ENCODE measurements at regions of chr20 and their contacts with region 1.

Region 1: DNA sequence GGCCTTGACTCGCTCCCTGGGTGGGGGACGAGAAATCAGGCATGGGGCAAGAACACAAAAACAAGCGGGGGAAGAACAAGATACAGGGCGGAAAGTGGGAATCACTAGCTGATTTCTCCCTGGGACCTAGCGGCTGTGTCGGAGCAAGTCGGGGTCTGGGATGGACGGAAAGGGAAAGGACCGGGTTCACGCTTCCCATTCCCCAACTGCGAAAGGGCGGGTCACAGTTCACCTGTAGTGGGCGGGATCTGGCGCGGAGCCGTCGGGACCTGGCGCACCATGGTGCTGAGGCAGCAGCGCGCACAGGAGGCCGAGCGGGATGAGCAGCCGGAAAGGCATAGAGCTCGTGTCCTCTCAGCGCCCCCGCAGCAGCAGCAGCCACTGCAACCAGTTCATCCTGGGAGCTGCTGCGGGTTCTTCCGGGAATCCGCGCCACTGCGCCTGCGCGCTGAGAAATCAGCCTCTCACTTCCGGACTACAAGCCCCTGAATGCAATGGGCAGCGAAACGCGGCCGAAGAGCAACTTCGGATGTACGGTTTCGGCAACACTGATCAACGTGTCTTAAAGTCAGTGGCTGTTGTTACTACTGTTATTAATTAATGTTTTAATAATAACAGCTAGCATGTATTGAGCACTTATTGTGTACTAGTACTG is at the start of gene EDEM2:
- DNase-seq: peak; percentile 93
- H3K4me3 ChIP-seq: peak within 1 kb of the TSS; percentile 98
- H3K27ac ChIP-seq: peak within 1 kb of the TSS; percentile 68
- H3K27me3 ChIP-seq: no peaks in the 10 kb centered on the region
- CTCF ChIP-seq: no peak
- polyA plus RNA-seq, gene EDEM2: 28.3 and 30.3 TPM in 2 replicates

Region 2: DNA sequence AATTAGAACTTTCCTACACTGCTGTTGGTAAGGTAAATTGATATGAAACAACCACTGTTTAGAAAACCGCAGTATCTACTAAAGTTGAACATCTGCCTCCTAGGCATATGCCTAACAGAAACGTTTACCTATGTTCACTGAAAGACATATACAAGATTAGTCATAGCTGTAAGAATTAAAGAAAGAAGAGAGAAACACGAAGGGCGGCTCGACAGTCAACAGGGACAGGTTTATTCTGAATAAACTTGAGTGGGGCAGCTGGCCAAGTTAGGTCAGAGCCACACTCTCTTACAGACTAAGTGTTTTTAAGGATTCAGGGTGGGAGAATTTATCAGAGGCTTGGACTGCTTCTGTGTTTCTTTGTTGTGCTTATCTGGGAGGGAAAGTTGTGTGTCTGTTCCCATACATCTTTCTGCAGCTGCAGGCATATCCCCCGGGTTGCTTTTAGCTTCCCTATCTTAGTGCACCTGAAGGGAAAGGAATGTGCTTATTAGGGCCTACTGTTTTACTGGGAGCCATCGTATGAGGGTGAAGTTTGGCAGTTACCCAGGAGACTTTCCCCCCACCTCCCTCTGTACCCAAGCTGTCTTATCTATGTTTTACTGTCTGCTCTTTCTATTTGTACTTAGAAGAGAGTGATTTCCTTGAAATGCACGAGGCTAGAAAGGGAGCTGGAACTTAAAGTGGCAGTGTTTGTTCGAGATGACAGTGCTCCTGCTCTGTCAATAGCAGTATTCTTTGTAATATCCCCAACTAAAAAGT is 45.2 kb after region 1 on chr20:
- CTCF ChIA-PET with region 1: interaction called, 14 read pairs
- POLR2A ChIA-PET with region 1: interaction called, 4 read pairs
- DNase-seq: no peak
- H3K4me3 ChIP-seq: no peak overlapping the region
- H3K27ac ChIP-seq: no peak overlapping the region
- H3K27me3 ChIP-seq: no peaks in the 10 kb centered on the region
- CTCF ChIP-seq: no peak

Region 3: GRCh38 chr20:35207950-35208611 is 61.0 kb after region 1 on chr20:
- CTCF ChIA-PET with region 1: interaction called, 95 read pairs
- POLR2A ChIA-PET with region 1: no interaction called
- DNase-seq: peak; percentile 61
- H3K4me3 ChIP-seq: peak overlapping the region; percentile 17; the same call in 1 of the 2 replicates
- H3K27ac ChIP-seq: peak overlapping the region; percentile 47
- H3K27me3 ChIP-seq: no peaks in the 10 kb centered on the region
- CTCF ChIP-seq: peak; percentile 84

Region 4: GRCh38 chr20:35269055-35269781 is 122.2 kb after region 1 on chr20:
- CTCF ChIA-PET with region 1: interaction called, 33 read pairs
- POLR2A ChIA-PET with region 1: interaction called, 4 read pairs
- DNase-seq: no peak
- H3K4me3 ChIP-seq: no peak overlapping the region
- H3K27ac ChIP-seq: no peak overlapping the region
- H3K27me3 ChIP-seq: no peaks in the 10 kb centered on the region
- CTCF ChIP-seq: peak; percentile 84

Region 5: GRCh38 chr20:35368666-35369423 is 221.8 kb after region 1 on chr20:
- CTCF ChIA-PET with region 1: no interaction called
- POLR2A ChIA-PET with region 1: no interaction called
- DNase-seq: no peak
- H3K4me3 ChIP-seq: no peak overlapping the region
- H3K27ac ChIP-seq: no peak overlapping the region
- H3K27me3 ChIP-seq: no peaks in the 10 kb centered on the region
- CTCF ChIP-seq: no peak

Region 6: GRCh38 chr20:35437491-35437998 is 290.5 kb after region 1 on chr20:
- CTCF ChIA-PET with region 1: interaction called, 26 read pairs
- POLR2A ChIA-PET with region 1: interaction called, 6 read pairs
- DNase-seq: no peak
- H3K4me3 ChIP-seq: peak overlapping the region; percentile 71
- H3K27ac ChIP-seq: peak overlapping the region; percentile 82
- H3K27me3 ChIP-seq: no peaks in the 10 kb centered on the region
- CTCF ChIP-seq: no peak